GM12878 (cell line): ENCODE measurements at regions of chr5 and their contacts with region 1.

Region 1: GRCh38 chr5:160021831-160022446 is 13.0 kb downstream of the TTC1 start:
- DNase-seq: peak; percentile 28
- ATAC-seq: peak; percentile 99
- H3K4me3 ChIP-seq: no peak overlapping the region
- H3K27ac ChIP-seq: no peak overlapping the region
- H3K4me1 ChIP-seq: no peaks in the 10 kb centered on the region
- H3K27me3 ChIP-seq: no peaks in the 10 kb centered on the region
- CTCF ChIP-seq: peak; percentile 70 to 83 (median 73)
- EP300 ChIP-seq: no peak
- POLR2A ChIP-seq: no peak
- RAD21 ChIP-seq: peak; percentile 82

Region 2: DNA sequence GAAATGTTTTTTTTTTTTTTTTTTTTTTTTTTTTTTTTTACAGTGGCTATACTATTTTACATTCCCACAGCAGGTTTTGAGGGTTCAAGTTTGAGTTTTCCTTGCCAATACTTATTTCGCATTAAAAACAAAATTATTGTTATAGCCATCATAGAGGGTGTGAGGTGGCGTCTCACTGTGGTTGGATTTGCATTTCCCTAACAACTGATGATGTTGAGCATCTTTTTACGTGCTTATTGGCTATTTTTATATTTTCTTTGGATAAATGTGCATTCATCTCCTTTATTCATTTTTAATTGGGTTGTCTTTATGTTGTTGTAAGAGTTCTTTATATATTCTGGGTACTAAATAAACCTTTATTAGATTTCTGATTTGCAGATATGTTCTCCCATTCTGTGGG is 777.8 kb before region 1 on chr5:
- CTCF ChIA-PET with region 1: no interaction called
- POLR2A ChIA-PET with region 1: no interaction called
- RAD21 ChIA-PET with region 1: no interaction called
- SMC1A ChIA-PET with region 1: no interaction called
- in situ Hi-C with region 1: no loop called
- intact Hi-C with region 1: no loop called
- DNase-seq: no peak
- ATAC-seq: no peak
- H3K4me3 ChIP-seq: no peak overlapping the region
- H3K27ac ChIP-seq: no peak overlapping the region
- H3K4me1 ChIP-seq: no peaks in the 10 kb centered on the region
- H3K27me3 ChIP-seq: no peaks in the 10 kb centered on the region
- CTCF ChIP-seq: no peak
- EP300 ChIP-seq: no peak
- POLR2A ChIP-seq: no peak
- RAD21 ChIP-seq: no peak

Region 3: GRCh38 chr5:160036243-160036642 is 14.3 kb after region 1 on chr5:
- CTCF ChIA-PET with region 1: interaction called, 18 read pairs
- POLR2A ChIA-PET with region 1: interaction called, 4 read pairs
- RAD21 ChIA-PET with region 1: interaction called, 4 read pairs
- SMC1A ChIA-PET with region 1: interaction called, 9 read pairs
- in situ Hi-C with region 1: no loop called
- intact Hi-C with region 1: no loop called
- DNase-seq: no peak
- ATAC-seq: no peak
- H3K4me3 ChIP-seq: no peak overlapping the region
- H3K27ac ChIP-seq: no peak overlapping the region
- H3K4me1 ChIP-seq: no peaks in the 10 kb centered on the region
- H3K27me3 ChIP-seq: no peaks in the 10 kb centered on the region
- CTCF ChIP-seq: no peak
- EP300 ChIP-seq: no peak
- POLR2A ChIP-seq: no peak
- RAD21 ChIP-seq: no peak

Region 4: GRCh38 chr5:160082614-160083500 is 60.9 kb after region 1 on chr5:
- CTCF ChIA-PET with region 1: interaction called, 17 read pairs
- POLR2A ChIA-PET with region 1: no interaction called
- RAD21 ChIA-PET with region 1: interaction called, 10 read pairs
- SMC1A ChIA-PET with region 1: interaction called, 17 read pairs
- in situ Hi-C with region 1: no loop called
- intact Hi-C with region 1: no loop called
- DNase-seq: no peak
- ATAC-seq: no peak
- H3K4me3 ChIP-seq: no peak overlapping the region
- H3K27ac ChIP-seq: no peak overlapping the region
- H3K4me1 ChIP-seq: no peaks in the 10 kb centered on the region
- H3K27me3 ChIP-seq: no peaks in the 10 kb centered on the region
- CTCF ChIP-seq: no peak
- EP300 ChIP-seq: no peak
- POLR2A ChIP-seq: no peak
- RAD21 ChIP-seq: no peak

Region 5: GRCh38 chr5:160159991-160160792 is 138.3 kb after region 1 on chr5:
- CTCF ChIA-PET with region 1: interaction called, 13 read pairs
- POLR2A ChIA-PET with region 1: no interaction called
- RAD21 ChIA-PET with region 1: interaction called, 4 read pairs
- SMC1A ChIA-PET with region 1: interaction called, 4 read pairs
- in situ Hi-C with region 1: no loop called
- intact Hi-C with region 1: loop called (anchors 1 kb)
- DNase-seq: peak; percentile 28
- ATAC-seq: peak; percentile 87
- H3K4me3 ChIP-seq: peak overlapping the region; percentile 32; the same call in 1 of the 2 replicates
- H3K27ac ChIP-seq: peak overlapping the region; percentile 66
- H3K4me1 ChIP-seq: peaks cover 16% of the 10 kb centered on the region
- H3K27me3 ChIP-seq: no peaks in the 10 kb centered on the region
- CTCF ChIP-seq: no peak
- EP300 ChIP-seq: no peak; a peak in 1 of 4 replicates
- POLR2A ChIP-seq: no peak
- RAD21 ChIP-seq: no peak

Region 6: GRCh38 chr5:160342403-160342941 is 320.5 kb after region 1 on chr5:
- CTCF ChIA-PET with region 1: interaction called, 162 read pairs
- POLR2A ChIA-PET with region 1: no interaction called
- RAD21 ChIA-PET with region 1: interaction called, 81 read pairs
- SMC1A ChIA-PET with region 1: interaction called, 149 read pairs
- in situ Hi-C with region 1: loop called (anchors 5 kb)
- intact Hi-C with region 1: loop called (anchors 1 kb)
- DNase-seq: no peak
- ATAC-seq: no peak
- H3K4me3 ChIP-seq: no peak overlapping the region
- H3K27ac ChIP-seq: no peak overlapping the region
- H3K4me1 ChIP-seq: no peaks in the 10 kb centered on the region
- H3K27me3 ChIP-seq: no peaks in the 10 kb centered on the region
- CTCF ChIP-seq: no peak
- EP300 ChIP-seq: no peak
- POLR2A ChIP-seq: no peak
- RAD21 ChIP-seq: no peak

Region 7: DNA sequence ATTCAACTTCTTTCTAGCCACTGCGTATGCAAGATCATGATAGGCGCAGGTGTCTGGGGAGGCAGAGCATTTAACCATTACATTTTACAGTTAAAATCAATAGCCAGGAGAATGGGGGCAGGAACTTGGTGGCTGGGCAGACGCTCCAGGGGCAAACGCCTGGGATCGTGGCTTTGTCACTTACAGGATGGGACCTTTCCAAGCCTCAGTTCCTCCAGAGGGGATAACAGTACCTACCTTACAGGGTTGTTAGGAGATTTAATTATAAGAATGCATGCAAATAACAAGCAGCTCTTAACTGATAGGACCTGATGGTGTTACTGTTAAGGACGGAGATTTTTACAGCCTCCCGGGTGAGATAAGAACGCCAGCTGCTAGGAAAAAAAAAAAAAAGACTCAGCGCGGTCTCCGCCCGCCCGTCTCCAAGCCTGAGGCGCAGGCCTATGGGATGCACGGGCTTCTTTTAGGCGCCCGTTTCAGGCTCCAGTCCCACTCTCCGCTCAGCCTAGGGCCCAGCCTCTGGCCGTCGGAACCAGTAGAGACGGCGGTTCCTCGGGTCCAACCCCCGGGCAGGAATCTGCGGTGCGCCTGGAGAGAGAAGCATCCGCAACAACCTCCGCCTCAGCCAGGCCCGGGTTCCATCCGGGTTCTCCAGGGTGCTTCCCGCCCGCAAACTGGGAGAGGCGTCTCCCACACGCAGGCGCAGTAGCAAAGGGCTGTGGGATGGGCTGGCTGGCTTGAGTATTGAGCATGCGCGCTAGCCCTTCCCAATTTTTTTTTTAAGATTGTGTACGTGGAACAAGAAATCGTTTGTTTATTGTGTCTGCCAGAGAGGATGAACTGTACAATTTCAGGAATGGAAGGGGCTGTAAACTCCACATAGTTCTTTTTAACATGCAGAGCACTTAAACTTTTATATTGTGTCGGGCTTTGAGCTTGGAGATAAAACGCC is 377.7 kb after region 1 on chr5 and contains the start of gene FAM200C:
- CTCF ChIA-PET with region 1: interaction called, 101 read pairs
- POLR2A ChIA-PET with region 1: no interaction called
- RAD21 ChIA-PET with region 1: no interaction called
- SMC1A ChIA-PET with region 1: interaction called, 3 read pairs
- in situ Hi-C with region 1: no loop called
- intact Hi-C with region 1: no loop called
- DNase-seq: peak; percentile 59
- ATAC-seq: peak; percentile 92
- H3K4me3 ChIP-seq: peak within 1 kb of the TSS; percentile 75
- H3K27ac ChIP-seq: peak within 1 kb of the TSS; percentile 84
- H3K4me1 ChIP-seq: no peaks in the 10 kb centered on the region; the same call in 1 of the 2 replicates
- H3K27me3 ChIP-seq: no peaks in the 10 kb centered on the region
- CTCF ChIP-seq: no peak
- EP300 ChIP-seq: 0 out of 4 replicates have a peak, but pooled peaks of 1 of the 2 experiments have one; percentile 7
- POLR2A ChIP-seq: peak; percentile 89
- RAD21 ChIP-seq: no peak
- polyA plus RNA-seq, gene FAM200C: 1.0 to 1.2 TPM